Activated CD4-positive, alpha-beta memory T cell treated with anti-CD3 and anti-CD28 coated beads, Interleukin-2, amount 10 ng/mL, durations not matched to agents 7 days and 5 days (primary cell): ENCODE measurements at regions of chr15 and their contacts with region 1.

Region 1: GRCh38 chr15:60507596-60508424 is 28.9 kb upstream of the ICE2 start:
- DNase-seq: peak; percentile 61
- H3K4me3 Mint-ChIP-seq: peak overlapping the region; percentile 18
- H3K27ac Mint-ChIP-seq: peak overlapping the region; percentile 67
- H3K4me1 Mint-ChIP-seq: peaks cover 55% of the 10 kb centered on the region
- H3K27me3 Mint-ChIP-seq: no peaks in the 10 kb centered on the region

Region 2: DNA sequence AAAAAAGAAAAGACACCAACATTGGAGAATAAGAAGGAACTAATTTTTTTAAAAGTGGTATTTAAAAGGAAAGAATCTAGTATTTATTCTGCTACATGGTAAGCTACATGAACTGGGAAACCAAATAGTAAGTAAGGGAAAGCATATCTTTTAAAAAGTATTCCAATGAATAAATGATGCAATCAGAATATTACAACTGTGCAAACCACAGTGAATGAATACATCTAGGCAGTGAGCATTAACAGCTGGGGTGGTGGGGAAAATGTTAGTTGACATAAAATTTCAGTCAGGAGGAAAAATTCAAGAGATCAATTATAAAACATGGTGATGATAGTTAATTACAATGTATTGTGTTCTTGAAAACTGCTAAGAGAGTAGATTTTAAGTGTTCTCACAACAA is 45.8 kb before region 1 on chr15:
- CTCF ChIA-PET with region 1: no interaction called
- POLR2A ChIA-PET with region 1: no interaction called
- DNase-seq: no peak
- H3K4me3 Mint-ChIP-seq: no peak overlapping the region
- H3K27ac Mint-ChIP-seq: no peak overlapping the region
- H3K4me1 Mint-ChIP-seq: peaks cover 4% of the 10 kb centered on the region
- H3K27me3 Mint-ChIP-seq: no peaks in the 10 kb centered on the region

Region 3: GRCh38 chr15:60529332-60529731 is 21.5 kb after region 1 on chr15:
- CTCF ChIA-PET with region 1: no interaction called
- POLR2A ChIA-PET with region 1: no interaction called
- DNase-seq: no peak
- H3K4me3 Mint-ChIP-seq: no peak overlapping the region
- H3K27ac Mint-ChIP-seq: no peak overlapping the region
- H3K4me1 Mint-ChIP-seq: peaks cover 54% of the 10 kb centered on the region
- H3K27me3 Mint-ChIP-seq: no peaks in the 10 kb centered on the region

Region 4: DNA sequence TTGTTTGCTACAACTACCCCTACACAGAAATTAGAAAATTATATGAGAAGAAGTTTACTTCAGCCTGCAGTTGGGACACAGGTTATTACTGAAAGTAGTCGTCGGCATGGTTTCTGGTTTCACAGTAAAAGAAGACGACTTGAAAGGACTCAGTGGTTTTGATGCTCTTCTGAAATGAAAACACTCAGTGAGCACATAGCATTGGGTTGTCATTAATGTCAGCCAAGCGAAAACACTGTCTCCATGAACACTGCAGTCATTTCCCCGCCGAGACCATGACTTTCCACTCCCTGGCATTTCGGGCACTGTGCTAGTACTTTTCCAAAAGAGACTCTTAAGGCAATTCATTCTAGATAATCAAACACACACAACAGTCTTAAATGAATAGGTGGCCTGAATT is 40.3 kb after region 1 on chr15:
- CTCF ChIA-PET with region 1: interaction called, 25 read pairs
- POLR2A ChIA-PET with region 1: interaction called, 4 read pairs
- DNase-seq: peak; percentile 60
- H3K4me3 Mint-ChIP-seq: peak overlapping the region; percentile 65
- H3K27ac Mint-ChIP-seq: peak overlapping the region; percentile 95
- H3K4me1 Mint-ChIP-seq: peaks cover 96% of the 10 kb centered on the region
- H3K27me3 Mint-ChIP-seq: no peaks in the 10 kb centered on the region

Region 5: DNA sequence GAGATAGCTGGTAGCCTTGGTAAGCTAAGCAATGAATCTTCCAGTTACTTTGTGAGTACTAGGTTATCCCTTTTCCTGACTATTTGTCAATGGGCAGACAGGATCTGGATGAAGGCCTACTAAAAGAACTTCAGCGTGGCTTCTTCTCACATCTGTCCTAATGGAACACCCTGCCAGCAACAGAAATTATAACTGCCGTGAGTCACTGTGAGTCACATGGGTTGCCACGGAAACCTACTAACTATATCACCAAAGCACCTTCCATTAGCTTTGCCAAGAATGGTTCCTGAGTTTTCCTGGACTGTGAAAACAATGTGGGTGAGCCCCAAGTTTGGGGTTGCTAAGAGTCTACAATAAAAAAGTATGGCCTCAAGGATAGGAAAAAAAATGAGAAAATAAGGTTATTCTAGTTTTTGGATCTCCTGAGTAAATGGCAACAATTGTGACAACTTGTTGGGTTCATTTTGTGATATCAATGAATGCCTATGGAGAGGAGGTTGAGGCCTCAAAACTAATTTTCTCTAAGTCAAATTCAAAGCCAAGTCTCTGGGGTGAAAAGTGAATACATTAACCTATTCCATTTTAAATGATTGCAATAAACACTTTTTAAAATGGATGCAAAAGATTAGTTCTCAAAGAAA is 166.2 kb after region 1 on chr15:
- CTCF ChIA-PET with region 1: no interaction called
- POLR2A ChIA-PET with region 1: no interaction called
- DNase-seq: peak; percentile 28
- H3K4me3 Mint-ChIP-seq: no peak overlapping the region
- H3K27ac Mint-ChIP-seq: no peak overlapping the region
- H3K4me1 Mint-ChIP-seq: peaks cover 7% of the 10 kb centered on the region
- H3K27me3 Mint-ChIP-seq: peaks cover 4% of the 10 kb centered on the region

Region 6: DNA sequence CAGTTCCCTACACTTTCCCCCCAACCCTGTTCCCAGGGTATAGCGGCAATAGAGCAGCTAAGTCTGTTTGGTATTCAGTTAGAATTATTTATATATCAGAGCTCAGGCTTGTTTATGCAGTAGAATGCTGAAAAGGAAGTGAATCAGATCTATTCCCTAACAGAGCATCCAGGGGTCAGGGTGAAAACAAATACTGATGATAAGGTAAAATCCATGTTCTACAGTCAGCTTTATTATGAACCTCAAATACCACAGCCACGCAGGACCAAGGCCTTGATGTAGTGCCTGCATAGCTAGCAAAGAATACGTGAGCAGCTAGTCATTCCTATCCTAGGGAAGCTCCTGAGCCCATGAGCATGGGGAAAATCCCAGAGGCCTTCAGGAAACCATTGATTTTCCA is 200.9 kb after region 1 on chr15:
- CTCF ChIA-PET with region 1: no interaction called
- POLR2A ChIA-PET with region 1: no interaction called
- DNase-seq: no peak
- H3K4me3 Mint-ChIP-seq: no peak overlapping the region
- H3K27ac Mint-ChIP-seq: no peak overlapping the region
- H3K4me1 Mint-ChIP-seq: peaks cover 29% of the 10 kb centered on the region
- H3K27me3 Mint-ChIP-seq: no peaks in the 10 kb centered on the region

Region 7: DNA sequence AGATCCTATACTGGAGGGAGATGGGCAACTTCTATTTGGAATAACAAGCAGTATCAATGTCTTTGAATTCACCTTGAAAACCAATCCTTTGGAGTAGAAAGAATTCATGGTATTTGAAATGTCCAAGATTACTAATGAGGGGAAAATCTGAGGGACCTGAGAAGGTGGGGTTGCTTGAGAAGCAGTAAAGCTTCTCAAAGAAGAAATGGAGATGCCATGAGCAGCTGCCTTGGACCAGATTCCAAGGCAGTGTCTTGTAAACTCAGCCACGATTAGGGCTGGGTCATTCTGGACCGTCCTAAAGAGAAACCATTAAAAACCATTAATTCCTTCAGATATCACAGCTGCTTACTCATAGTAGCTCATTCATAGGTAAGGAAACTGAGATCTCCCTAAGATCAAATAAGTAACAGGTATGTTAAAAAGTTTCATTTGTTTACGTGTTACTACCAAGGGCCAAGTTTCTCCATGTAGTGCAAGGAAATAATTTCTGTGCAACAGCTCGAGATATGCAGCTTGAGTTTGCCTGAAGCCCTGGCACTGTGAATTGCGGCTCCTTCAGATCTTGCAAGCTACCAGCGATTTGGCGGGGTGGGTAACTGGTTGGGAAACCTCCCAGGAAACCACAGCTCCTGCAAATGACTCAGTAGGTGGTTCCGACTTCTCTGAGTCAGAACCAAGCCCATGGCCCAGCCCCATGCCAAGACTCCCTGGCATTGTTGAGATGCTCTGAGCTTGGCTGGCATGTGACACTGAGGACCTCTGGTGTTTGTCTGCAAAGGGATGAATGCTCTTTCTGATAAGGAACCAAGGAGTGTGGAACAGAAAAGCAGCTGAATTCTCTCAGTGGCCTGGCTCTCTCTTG is 424.5 kb after region 1 on chr15:
- CTCF ChIA-PET with region 1: interaction called, 45 read pairs
- POLR2A ChIA-PET with region 1: interaction called, 5 read pairs
- DNase-seq: peak; percentile 74
- H3K4me3 Mint-ChIP-seq: no peak overlapping the region
- H3K27ac Mint-ChIP-seq: no peak overlapping the region
- H3K4me1 Mint-ChIP-seq: peaks cover 26% of the 10 kb centered on the region
- H3K27me3 Mint-ChIP-seq: peaks cover 53% of the 10 kb centered on the region